BJ (cell line): ENCODE measurements at regions of chr13 and their contacts with region 1.

Region 1: DNA sequence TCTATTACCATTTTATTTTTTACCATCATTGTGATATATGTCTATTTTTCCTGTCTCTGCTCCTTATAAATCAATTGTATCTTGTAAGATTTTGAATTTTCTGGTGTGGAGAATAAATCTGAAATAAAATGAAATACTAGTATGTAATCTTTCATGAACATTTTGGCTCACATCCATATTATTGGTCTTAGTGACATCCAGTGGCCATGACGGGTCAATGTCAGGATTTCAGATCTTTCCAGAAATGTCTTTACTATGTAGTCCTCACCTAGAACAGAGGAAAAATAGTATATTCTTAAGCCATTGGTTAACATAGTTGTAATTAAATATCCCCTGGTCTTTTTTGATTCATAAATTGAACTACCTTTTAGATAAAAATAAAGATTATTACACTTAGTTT is 109.8 kb upstream of the GPC6 start:
- DNase-seq: no peak
- H3K4me3 ChIP-seq: no peak overlapping the region
- H3K27me3 ChIP-seq: no peaks in the 10 kb centered on the region
- CTCF ChIP-seq: no peak

Region 2: GRCh38 chr13:92994056-92994455 is 122.8 kb before region 1 on chr13:
- CTCF ChIA-PET with region 1: no interaction called
- POLR2A ChIA-PET with region 1: no interaction called
- DNase-seq: no peak
- H3K4me3 ChIP-seq: no peak overlapping the region
- H3K27me3 ChIP-seq: no peaks in the 10 kb centered on the region
- CTCF ChIP-seq: no peak

Region 3: DNA sequence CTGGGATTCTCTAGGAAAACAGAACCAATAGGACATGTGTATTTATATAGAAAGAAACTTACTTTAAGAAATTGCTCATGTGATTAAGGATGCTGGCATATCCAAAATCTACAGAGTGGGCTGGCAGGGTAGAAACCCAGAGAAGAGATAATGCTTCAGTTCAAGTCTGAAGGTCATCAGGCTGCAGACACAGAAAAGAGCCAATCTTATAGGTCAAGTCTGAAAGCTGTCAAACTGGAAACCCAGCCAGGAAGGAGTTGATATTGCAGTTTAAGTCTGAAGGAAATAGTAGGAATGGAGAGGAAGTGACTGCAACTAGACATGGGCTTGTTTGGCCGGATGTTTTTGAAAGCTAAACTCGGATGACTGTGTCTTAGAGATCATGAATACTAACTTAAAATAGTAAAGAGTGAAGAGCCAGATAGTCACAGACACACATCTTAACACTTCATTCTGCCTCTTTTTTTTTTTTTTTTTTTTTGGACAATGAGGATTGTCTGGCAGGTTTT is 15.5 kb before region 1 on chr13:
- CTCF ChIA-PET with region 1: no interaction called
- POLR2A ChIA-PET with region 1: no interaction called
- DNase-seq: no peak
- H3K4me3 ChIP-seq: no peak overlapping the region
- H3K27me3 ChIP-seq: no peaks in the 10 kb centered on the region
- CTCF ChIP-seq: no peak

Region 4: DNA sequence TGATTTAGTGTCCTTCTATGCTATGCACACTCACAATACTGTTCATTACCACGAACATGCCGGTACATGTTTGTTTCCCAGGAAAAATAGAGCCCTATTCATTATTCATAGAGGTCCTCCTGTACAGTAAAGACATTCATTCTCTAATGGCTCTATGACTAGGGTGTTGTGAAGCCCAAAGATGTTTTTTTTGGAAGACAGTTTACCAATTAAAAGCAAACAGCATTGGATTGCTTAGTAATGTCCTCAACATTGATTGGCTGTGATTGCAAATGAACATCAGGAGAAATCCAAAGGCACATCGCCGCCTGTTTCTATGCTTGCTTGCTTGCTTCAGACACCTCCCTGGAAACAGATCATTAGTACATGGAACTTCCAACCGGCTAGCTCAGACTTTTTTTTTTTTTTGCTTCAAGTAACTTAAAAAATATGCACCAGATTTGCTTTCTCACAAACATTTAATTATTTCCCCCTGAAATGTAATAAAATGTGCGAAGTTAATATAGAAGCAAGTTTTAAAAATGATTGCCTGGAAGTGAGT is 101.0 kb after region 1 on chr13:
- CTCF ChIA-PET with region 1: no interaction called
- POLR2A ChIA-PET with region 1: interaction called, 10 read pairs
- DNase-seq: no peak
- H3K4me3 ChIP-seq: no peak overlapping the region
- H3K27me3 ChIP-seq: no peaks in the 10 kb centered on the region
- CTCF ChIP-seq: no peak